Caco-2 (cell line): ENCODE measurements at regions of chr9 and their contacts with region 1.

Region 1: GRCh38 chr9:37913480-37914153 is 9.7 kb upstream of the SLC25A51 start:
- DNase-seq: peak; percentile 86 to 93
- H3K4me3 ChIP-seq: no peak overlapping the region
- H3K4me3 Mint-ChIP-seq: no peak overlapping the region
- H3K27ac Mint-ChIP-seq: peak overlapping the region; percentile 57
- H3K4me1 ChIP-seq: peaks cover 10% of the 10 kb centered on the region
- H3K4me1 Mint-ChIP-seq: peaks cover 11% of the 10 kb centered on the region
- H3K27me3 ChIP-seq: no peaks in the 10 kb centered on the region
- H3K27me3 Mint-ChIP-seq: no peaks in the 10 kb centered on the region
- CTCF ChIP-seq: peak; percentile 88 to 93

Region 2: DNA sequence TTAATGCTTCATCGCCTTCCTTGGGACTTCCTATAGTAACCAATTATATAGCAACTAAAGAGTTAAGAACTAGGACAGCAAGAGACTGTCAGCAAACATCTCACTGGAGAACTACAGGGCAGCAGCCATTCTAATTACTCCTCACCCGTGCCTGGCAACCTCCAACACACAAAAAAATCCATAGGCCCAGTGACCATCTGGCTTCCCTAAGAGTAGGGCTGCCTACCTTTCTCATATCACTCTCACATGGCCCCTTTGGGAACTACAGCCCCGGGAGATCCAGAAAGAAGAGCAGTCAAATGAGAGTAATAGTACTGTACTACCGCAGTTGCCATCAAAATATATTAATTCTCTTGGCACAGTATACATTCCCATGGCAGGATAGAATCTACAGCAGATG is 107.3 kb before region 1 on chr9:
- CTCF ChIA-PET with region 1: no interaction called
- POLR2A ChIA-PET with region 1: no interaction called
- intact Hi-C with region 1: no loop called
- DNase-seq: no peak
- H3K4me3 ChIP-seq: no peak overlapping the region
- H3K4me3 Mint-ChIP-seq: no peak overlapping the region
- H3K27ac Mint-ChIP-seq: no peak overlapping the region
- H3K4me1 ChIP-seq: no peaks in the 10 kb centered on the region
- H3K4me1 Mint-ChIP-seq: peaks cover 9% of the 10 kb centered on the region
- H3K27me3 ChIP-seq: no peaks in the 10 kb centered on the region
- H3K27me3 Mint-ChIP-seq: no peaks in the 10 kb centered on the region
- CTCF ChIP-seq: no peak

Region 3: GRCh38 chr9:37943329-37944265 is 30.0 kb after region 1 on chr9:
- CTCF ChIA-PET with region 1: interaction called, 6 read pairs
- POLR2A ChIA-PET with region 1: interaction called, 3 read pairs
- intact Hi-C with region 1: loop called (anchors 2 kb)
- DNase-seq: peak; percentile 69 to 80
- H3K4me3 ChIP-seq: no peak overlapping the region
- H3K4me3 Mint-ChIP-seq: peak overlapping the region; percentile 32
- H3K27ac Mint-ChIP-seq: peak overlapping the region; percentile 74
- H3K4me1 ChIP-seq: peaks cover 65% of the 10 kb centered on the region
- H3K4me1 Mint-ChIP-seq: peaks cover 35% of the 10 kb centered on the region
- H3K27me3 ChIP-seq: no peaks in the 10 kb centered on the region
- H3K27me3 Mint-ChIP-seq: no peaks in the 10 kb centered on the region
- CTCF ChIP-seq: no peak

Region 4: GRCh38 chr9:37963936-37964739 is 50.5 kb after region 1 on chr9:
- CTCF ChIA-PET with region 1: interaction called, 16 read pairs
- POLR2A ChIA-PET with region 1: no interaction called
- intact Hi-C with region 1: loop called (anchors 1 kb)
- DNase-seq: peak; percentile 71 to 76
- H3K4me3 ChIP-seq: no peak overlapping the region
- H3K4me3 Mint-ChIP-seq: no peak overlapping the region
- H3K27ac Mint-ChIP-seq: peak overlapping the region; percentile 90
- H3K4me1 ChIP-seq: peaks cover 59% of the 10 kb centered on the region
- H3K4me1 Mint-ChIP-seq: peaks cover 29% of the 10 kb centered on the region
- H3K27me3 ChIP-seq: no peaks in the 10 kb centered on the region
- H3K27me3 Mint-ChIP-seq: no peaks in the 10 kb centered on the region
- CTCF ChIP-seq: no peak

Region 5: GRCh38 chr9:38047301-38048251 is 134.0 kb after region 1 on chr9:
- CTCF ChIA-PET with region 1: interaction called, 3 read pairs
- POLR2A ChIA-PET with region 1: no interaction called
- intact Hi-C with region 1: loop called (anchors 2 kb)
- DNase-seq: peak; percentile 79 to 90
- H3K4me3 ChIP-seq: peak overlapping the region; percentile 17
- H3K4me3 Mint-ChIP-seq: peak overlapping the region; percentile 79
- H3K27ac Mint-ChIP-seq: peak overlapping the region; percentile 100
- H3K4me1 ChIP-seq: peaks cover 62% of the 10 kb centered on the region
- H3K4me1 Mint-ChIP-seq: peaks cover 51% of the 10 kb centered on the region
- H3K27me3 ChIP-seq: no peaks in the 10 kb centered on the region
- H3K27me3 Mint-ChIP-seq: no peaks in the 10 kb centered on the region
- CTCF ChIP-seq: no peak

Region 6: GRCh38 chr9:38068866-38069629 is 155.4 kb after region 1 on chr9 and contains the start of gene SHB:
- CTCF ChIA-PET with region 1: interaction called, 5 read pairs
- POLR2A ChIA-PET with region 1: no interaction called
- intact Hi-C with region 1: loop called (anchors 1 kb)
- DNase-seq: peak; percentile 81 to 84
- H3K4me3 ChIP-seq: peak within 1 kb of the TSS; percentile 92
- H3K4me3 Mint-ChIP-seq: peak within 1 kb of the TSS; percentile 95
- H3K27ac Mint-ChIP-seq: peak within 1 kb of the TSS; percentile 83
- H3K4me1 ChIP-seq: peaks cover 32% of the 10 kb centered on the region
- H3K4me1 Mint-ChIP-seq: peaks cover 24% of the 10 kb centered on the region
- H3K27me3 ChIP-seq: no peaks in the 10 kb centered on the region
- H3K27me3 Mint-ChIP-seq: no peaks in the 10 kb centered on the region
- CTCF ChIP-seq: no peak
- total RNA-seq, gene SHB: 18.3 and 18.4 TPM in 2 replicates

Region 7: GRCh38 chr9:38088006-38088925 is 174.6 kb after region 1 on chr9:
- CTCF ChIA-PET with region 1: interaction called, 8 read pairs
- POLR2A ChIA-PET with region 1: no interaction called
- intact Hi-C with region 1: loop called (anchors 1 kb)
- DNase-seq: peak; percentile 74 to 86
- H3K4me3 ChIP-seq: no peak overlapping the region
- H3K4me3 Mint-ChIP-seq: no peak overlapping the region
- H3K27ac Mint-ChIP-seq: no peak overlapping the region
- H3K4me1 ChIP-seq: no peaks in the 10 kb centered on the region
- H3K4me1 Mint-ChIP-seq: peaks cover 5% of the 10 kb centered on the region
- H3K27me3 ChIP-seq: no peaks in the 10 kb centered on the region
- H3K27me3 Mint-ChIP-seq: no peaks in the 10 kb centered on the region
- CTCF ChIP-seq: peak; percentile 92 to 93

Region 8: DNA sequence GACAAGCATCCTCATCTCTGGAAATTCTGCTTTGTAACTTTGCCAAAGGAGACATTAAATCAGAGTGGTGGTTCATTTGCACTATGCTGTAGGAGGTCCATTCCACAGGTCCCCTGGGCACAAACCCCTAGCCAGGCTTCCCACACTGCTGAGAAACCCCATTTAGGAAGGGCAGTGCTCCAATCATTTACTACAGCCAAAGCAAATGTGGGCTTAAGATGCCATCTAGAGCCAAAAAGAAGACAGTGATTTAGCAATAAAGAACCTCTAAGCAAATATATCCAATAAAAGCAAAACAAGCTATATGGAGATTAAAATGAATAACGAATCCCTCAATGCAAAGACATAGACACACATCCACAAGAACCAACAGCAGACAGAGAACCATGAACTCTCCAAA is 349.9 kb after region 1 on chr9:
- CTCF ChIA-PET with region 1: interaction called, 25 read pairs
- POLR2A ChIA-PET with region 1: no interaction called
- intact Hi-C with region 1: loop called (anchors 1 kb)
- DNase-seq: peak in 1 of 2 experiments; percentile 35
- H3K4me3 ChIP-seq: no peak overlapping the region
- H3K4me3 Mint-ChIP-seq: no peak overlapping the region
- H3K27ac Mint-ChIP-seq: no peak overlapping the region
- H3K4me1 ChIP-seq: no peaks in the 10 kb centered on the region
- H3K4me1 Mint-ChIP-seq: no peaks in the 10 kb centered on the region
- H3K27me3 ChIP-seq: no peaks in the 10 kb centered on the region
- H3K27me3 Mint-ChIP-seq: no peaks in the 10 kb centered on the region
- CTCF ChIP-seq: peak; percentile 27 to 50